ENCODE measurements at regions of chr1 and their contacts with region 1.

Region 1: GRCh38 chr1:244047621-244048471 is 3.2 kb upstream of the ZBTB18 start:
- DNase-seq: peak; percentile 98
- H3K4me3 Mint-ChIP-seq: peak overlapping the region; percentile 94
- H3K27ac Mint-ChIP-seq: peak overlapping the region; percentile 97
- H3K4me1 Mint-ChIP-seq: peaks cover 41% of the 10 kb centered on the region
- H3K27me3 Mint-ChIP-seq: no peaks in the 10 kb centered on the region

Region 2: GRCh38 chr1:243255791-243256512 is 791.9 kb before region 1 on chr1 and contains the start of gene SDCCAG8:
- CTCF ChIA-PET with region 1: no interaction called
- POLR2A ChIA-PET with region 1: no interaction called
- intact Hi-C with region 1: loop called (anchors 1 kb)
- DNase-seq: peak; percentile 97
- H3K4me3 Mint-ChIP-seq: peak within 1 kb of the TSS; percentile 95
- H3K27ac Mint-ChIP-seq: peak within 1 kb of the TSS; percentile 100
- H3K4me1 Mint-ChIP-seq: peaks cover 40% of the 10 kb centered on the region
- H3K27me3 Mint-ChIP-seq: peaks cover 3% of the 10 kb centered on the region
- total RNA-seq, gene SDCCAG8: 20.7 to 23.2 TPM

Region 3: DNA sequence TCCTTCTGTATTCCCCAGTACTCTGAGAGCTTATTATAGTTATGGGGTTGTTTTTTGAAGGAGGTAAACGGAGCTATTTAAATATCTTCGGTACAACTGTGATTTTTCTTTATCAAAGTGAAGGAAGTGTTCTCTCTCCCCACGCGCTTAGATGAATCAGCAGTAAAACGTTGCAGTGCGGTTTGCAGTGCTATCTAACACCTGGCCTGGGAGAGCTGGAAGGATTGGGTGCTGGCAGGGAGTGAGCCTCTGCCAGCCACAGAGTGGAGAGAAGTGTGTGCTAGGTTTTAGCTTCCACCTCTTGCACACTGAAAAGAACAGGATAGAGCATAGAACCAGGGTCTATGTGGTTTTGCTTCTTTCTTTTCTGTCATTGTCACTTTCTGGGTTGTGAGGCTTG is 626.1 kb before region 1 on chr1:
- CTCF ChIA-PET with region 1: no interaction called
- POLR2A ChIA-PET with region 1: no interaction called
- intact Hi-C with region 1: loop called (anchors 5 kb)
- DNase-seq: peak; percentile 77
- H3K4me3 Mint-ChIP-seq: peak overlapping the region; percentile 49
- H3K27ac Mint-ChIP-seq: peak overlapping the region; percentile 5
- H3K4me1 Mint-ChIP-seq: peaks cover 23% of the 10 kb centered on the region
- H3K27me3 Mint-ChIP-seq: no peaks in the 10 kb centered on the region

Region 4: GRCh38 chr1:243596431-243597062 is 451.3 kb before region 1 on chr1:
- CTCF ChIA-PET with region 1: no interaction called
- POLR2A ChIA-PET with region 1: no interaction called
- intact Hi-C with region 1: loop called (anchors 1 kb)
- DNase-seq: peak; percentile 48
- H3K4me3 Mint-ChIP-seq: peak overlapping the region; percentile 17
- H3K27ac Mint-ChIP-seq: peak overlapping the region; percentile 71
- H3K4me1 Mint-ChIP-seq: peaks cover 29% of the 10 kb centered on the region
- H3K27me3 Mint-ChIP-seq: no peaks in the 10 kb centered on the region

Region 5: GRCh38 chr1:244163861-244164562 is 116.2 kb after region 1 on chr1:
- CTCF ChIA-PET with region 1: no interaction called
- POLR2A ChIA-PET with region 1: no interaction called
- intact Hi-C with region 1: no loop called
- DNase-seq: no peak
- H3K4me3 Mint-ChIP-seq: no peak overlapping the region
- H3K27ac Mint-ChIP-seq: no peak overlapping the region
- H3K4me1 Mint-ChIP-seq: no peaks in the 10 kb centered on the region
- H3K27me3 Mint-ChIP-seq: no peaks in the 10 kb centered on the region

Region 6: DNA sequence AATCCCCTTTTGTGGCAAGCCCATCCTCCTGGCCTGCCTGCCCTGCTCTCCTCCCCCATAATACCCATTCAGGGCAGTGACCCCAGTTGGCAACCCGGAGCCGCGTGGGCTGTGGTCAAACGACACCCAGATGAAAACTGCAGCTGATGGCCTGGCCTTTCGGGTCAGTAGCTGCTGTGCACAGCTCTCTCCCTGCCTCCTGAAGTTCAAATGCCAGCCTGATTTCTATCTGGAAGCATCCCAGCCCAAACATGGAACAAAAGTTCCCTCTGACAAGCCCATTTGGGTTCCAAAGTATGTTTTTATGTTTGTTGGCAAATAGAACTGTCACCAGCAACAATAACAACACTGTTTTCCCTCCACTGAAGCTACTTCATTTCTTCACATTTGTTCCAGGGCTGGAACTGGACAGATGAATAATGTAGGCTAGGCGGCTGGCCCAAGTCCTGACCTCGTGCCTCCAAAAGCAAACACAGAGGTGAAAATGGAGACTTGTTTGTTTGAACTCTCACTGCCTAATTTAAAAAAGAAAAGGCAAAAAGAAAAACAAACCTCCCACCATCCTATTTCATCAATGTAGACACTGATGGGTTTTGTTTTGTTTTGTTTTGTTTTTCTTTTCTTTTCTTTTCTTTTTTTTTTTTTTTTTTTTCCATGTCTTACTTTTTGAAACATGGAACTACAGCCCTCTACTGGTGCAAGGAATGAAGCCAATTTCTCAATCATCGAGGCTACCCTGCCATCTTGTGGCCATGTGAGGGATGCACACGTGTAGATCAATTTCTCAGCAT is 224.8 kb after region 1 on chr1:
- CTCF ChIA-PET with region 1: no interaction called
- POLR2A ChIA-PET with region 1: no interaction called
- intact Hi-C with region 1: loop called (anchors 5 kb)
- DNase-seq: peak; percentile 80
- H3K4me3 Mint-ChIP-seq: no peak overlapping the region
- H3K27ac Mint-ChIP-seq: no peak overlapping the region
- H3K4me1 Mint-ChIP-seq: peaks cover 5% of the 10 kb centered on the region
- H3K27me3 Mint-ChIP-seq: peaks cover 1% of the 10 kb centered on the region

Region 7: GRCh38 chr1:244391761-244392160 is 343.9 kb after region 1 on chr1:
- CTCF ChIA-PET with region 1: no interaction called
- POLR2A ChIA-PET with region 1: no interaction called
- intact Hi-C with region 1: no loop called
- DNase-seq: no peak
- H3K4me3 Mint-ChIP-seq: no peak overlapping the region
- H3K27ac Mint-ChIP-seq: no peak overlapping the region
- H3K4me1 Mint-ChIP-seq: no peaks in the 10 kb centered on the region
- H3K27me3 Mint-ChIP-seq: no peaks in the 10 kb centered on the region

Region 8: GRCh38 chr1:244451951-244452795 is 404.3 kb after region 1 on chr1:
- CTCF ChIA-PET with region 1: no interaction called
- POLR2A ChIA-PET with region 1: no interaction called
- intact Hi-C with region 1: loop called (anchors 1 kb)
- DNase-seq: peak; percentile 99
- H3K4me3 Mint-ChIP-seq: peak overlapping the region; percentile 96
- H3K27ac Mint-ChIP-seq: peak overlapping the region; percentile 97
- H3K4me1 Mint-ChIP-seq: peaks cover 45% of the 10 kb centered on the region
- H3K27me3 Mint-ChIP-seq: no peaks in the 10 kb centered on the region

Region 9: DNA sequence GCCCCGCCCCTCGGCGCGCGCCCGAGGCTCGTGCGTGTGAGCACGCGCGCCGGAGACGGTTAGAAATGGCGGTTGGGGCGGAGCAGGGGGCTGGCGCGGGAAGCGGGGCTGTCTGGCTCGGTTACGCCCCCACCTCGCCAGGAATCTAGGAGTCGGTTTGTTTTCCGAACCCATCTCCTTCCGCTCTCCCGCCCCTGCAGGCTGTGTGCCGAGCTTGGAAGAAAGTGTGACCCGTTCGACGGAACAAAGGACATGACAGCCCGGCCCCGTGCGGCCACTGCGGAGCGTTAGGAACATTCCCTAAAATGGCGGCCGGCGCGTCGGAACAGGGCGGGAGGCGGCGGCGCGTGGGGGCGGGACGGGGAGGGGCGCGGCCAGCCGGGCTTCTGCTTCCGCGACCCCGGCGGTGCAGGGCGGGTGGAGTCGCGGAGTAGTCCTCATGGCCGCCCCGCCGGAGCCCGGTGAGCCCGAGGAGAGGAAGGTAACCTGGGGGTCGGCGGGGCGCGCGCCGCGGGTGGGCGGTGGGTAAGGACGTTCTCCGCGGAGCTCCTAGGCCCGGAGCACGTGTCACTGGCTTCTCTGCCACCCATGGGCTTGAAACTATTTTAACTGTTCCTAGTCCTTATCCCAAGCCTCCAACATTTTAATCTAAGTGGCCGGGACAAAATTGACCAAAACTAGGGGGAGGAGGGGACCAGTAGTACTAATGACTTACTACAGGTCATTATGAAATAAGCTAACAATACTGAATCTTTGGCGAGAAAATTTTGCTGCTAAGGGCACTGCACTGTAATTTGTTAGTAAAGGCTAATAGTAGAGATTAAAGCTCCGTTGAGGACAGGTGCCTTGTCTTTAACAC is 787.7 kb after region 1 on chr1 and contains the start of gene COX20:
- CTCF ChIA-PET with region 1: no interaction called
- POLR2A ChIA-PET with region 1: no interaction called
- intact Hi-C with region 1: loop called (anchors 1 kb)
- DNase-seq: peak; percentile 89
- H3K4me3 Mint-ChIP-seq: peak within 1 kb of the TSS; percentile 94
- H3K27ac Mint-ChIP-seq: peak within 1 kb of the TSS; percentile 99
- H3K4me1 Mint-ChIP-seq: peaks cover 45% of the 10 kb centered on the region
- H3K27me3 Mint-ChIP-seq: no peaks in the 10 kb centered on the region
- total RNA-seq, gene COX20: 23.4 to 27.8 TPM

Measured in activated CD4-positive, alpha-beta memory T cell treated with anti-CD3 and anti-CD28 coated beads for 36 hours (primary cell).